Aorta (tissue), 5 donors: ENCODE measurements at regions of chr3 and their contacts with region 1.

Region 1: DNA sequence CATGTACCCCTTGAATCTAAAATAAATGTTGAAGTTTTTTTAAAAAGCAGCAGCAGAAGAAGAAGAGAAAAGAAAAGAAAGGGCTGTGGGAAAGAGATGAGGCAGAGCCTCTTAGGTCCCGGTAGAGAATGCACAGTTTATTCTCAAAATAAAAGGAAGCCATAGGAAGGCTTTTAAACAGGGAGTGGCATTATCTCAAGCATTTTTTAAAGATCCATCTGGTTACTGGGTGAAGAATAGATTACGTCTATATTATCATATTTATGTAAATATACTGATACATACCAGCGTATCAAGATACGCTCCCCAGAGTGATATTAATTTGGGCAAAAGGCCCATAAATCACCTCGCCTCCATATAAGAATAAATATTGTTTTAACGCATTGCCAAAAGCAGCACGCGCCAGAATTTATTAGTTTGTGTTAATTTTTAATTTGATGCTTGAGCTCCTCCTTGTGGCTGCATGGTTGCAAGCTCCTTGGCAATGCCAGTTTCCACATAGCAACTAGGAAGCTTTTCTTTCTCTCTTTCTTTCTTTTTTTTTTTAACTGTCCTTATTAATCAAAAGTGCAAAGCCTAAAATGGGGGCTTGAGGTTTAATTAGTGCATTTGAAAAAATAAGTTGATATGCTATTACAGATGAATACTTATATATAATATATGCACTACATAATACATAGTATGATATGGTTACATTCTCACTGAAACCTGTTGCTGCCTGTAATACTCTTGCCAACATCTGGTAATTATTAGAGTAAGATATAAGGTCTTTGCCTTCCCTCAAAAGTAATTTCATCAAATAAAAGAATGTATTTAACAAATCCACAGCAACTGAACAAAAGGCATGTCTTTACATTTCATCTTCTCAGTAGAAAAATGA is 242.8 kb upstream of the UBE2E2 start:
- DNase-seq: peak in 1 of 2 donors; percentile 45
- ATAC-seq: no peak
- H3K4me3 ChIP-seq: no peak overlapping the region
- H3K27ac ChIP-seq: no peak overlapping the region
- H3K4me1 ChIP-seq: peaks cover 0 to 3% of the 10 kb centered on the region in 2 donors
- H3K27me3 ChIP-seq: no peaks in the 10 kb centered on the region

Region 2: DNA sequence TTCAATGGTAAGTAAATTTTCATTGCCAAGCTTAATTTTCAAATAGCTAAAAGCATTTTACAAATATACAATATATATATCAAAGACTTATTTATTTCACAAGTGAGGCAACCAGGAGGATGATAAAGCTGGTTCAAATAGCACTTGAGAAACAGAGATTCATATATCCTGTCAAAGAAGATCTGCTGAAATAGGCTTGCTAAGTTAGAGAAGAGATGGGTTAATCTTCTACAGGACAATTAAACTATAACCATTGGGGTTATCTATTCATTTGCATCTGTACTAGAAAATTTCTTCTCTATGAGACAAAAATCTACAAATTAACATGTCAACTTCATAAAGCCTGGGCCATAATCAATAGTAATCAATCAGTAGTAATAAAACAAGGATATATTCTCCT is 395.0 kb before region 1 on chr3:
- intact Hi-C with region 1: loop called in 1 of 2 experiments (anchors 10 kb)
- DNase-seq: no peak
- ATAC-seq: no peak
- H3K4me3 ChIP-seq: no peak overlapping the region
- H3K27ac ChIP-seq: no peak overlapping the region
- H3K4me1 ChIP-seq: no peaks in the 10 kb centered on the region
- H3K27me3 ChIP-seq: no peaks in the 10 kb centered on the region